CD8-positive, alpha-beta T cell (primary cell): ENCODE measurements at regions of chr16 and their contacts with region 1.

Region 1: GRCh38 chr16:31323959-31324629 is 30.9 kb upstream of the ITGAX start:
- DNase-seq: no peak
- ATAC-seq: no peak
- H3K4me3 ChIP-seq: no peak overlapping the region
- H3K4me3 Mint-ChIP-seq: no peak overlapping the region
- H3K27ac ChIP-seq: no peak overlapping the region
- H3K27ac Mint-ChIP-seq: no peak overlapping the region
- H3K4me1 ChIP-seq: no peaks in the 10 kb centered on the region
- H3K4me1 Mint-ChIP-seq: peaks cover 10% of the 10 kb centered on the region
- H3K27me3 ChIP-seq: no peaks in the 10 kb centered on the region
- H3K27me3 Mint-ChIP-seq: peaks cover 2% of the 10 kb centered on the region
- CTCF ChIP-seq: no peak

Region 2: GRCh38 chr16:31138621-31139578 is 185.2 kb before region 1 on chr16:
- CTCF ChIA-PET with region 1: no interaction called
- POLR2A ChIA-PET with region 1: no interaction called
- intact Hi-C with region 1: no loop called
- DNase-seq: no peak
- ATAC-seq: no peak
- H3K4me3 ChIP-seq: no peak overlapping the region
- H3K4me3 Mint-ChIP-seq: no peak overlapping the region
- H3K27ac ChIP-seq: no peak overlapping the region
- H3K27ac Mint-ChIP-seq: no peak overlapping the region
- H3K4me1 ChIP-seq: peaks cover 16% of the 10 kb centered on the region
- H3K4me1 Mint-ChIP-seq: peaks cover 14% of the 10 kb centered on the region
- H3K27me3 ChIP-seq: no peaks in the 10 kb centered on the region
- H3K27me3 Mint-ChIP-seq: no peaks in the 10 kb centered on the region
- CTCF ChIP-seq: no peak

Region 3: GRCh38 chr16:31365131-31365865 is 41.2 kb after region 1 on chr16:
- CTCF ChIA-PET with region 1: no interaction called
- POLR2A ChIA-PET with region 1: no interaction called
- intact Hi-C with region 1: loop called in 1 of 2 experiments (anchors 10 kb)
- DNase-seq: peak in 2 of 9 experiments; percentile 64 to 81
- ATAC-seq: peak; percentile 77
- H3K4me3 ChIP-seq: no peak overlapping the region
- H3K4me3 Mint-ChIP-seq: peak overlapping the region; percentile 11
- H3K27ac ChIP-seq: peak overlapping the region; percentile 30 to 55
- H3K27ac Mint-ChIP-seq: peak overlapping the region; percentile 58
- H3K4me1 ChIP-seq: peaks cover 11% of the 10 kb centered on the region
- H3K4me1 Mint-ChIP-seq: peaks cover 23% of the 10 kb centered on the region
- H3K27me3 ChIP-seq: no peaks in the 10 kb centered on the region
- H3K27me3 Mint-ChIP-seq: no peaks in the 10 kb centered on the region
- CTCF ChIP-seq: no peak

Region 4: DNA sequence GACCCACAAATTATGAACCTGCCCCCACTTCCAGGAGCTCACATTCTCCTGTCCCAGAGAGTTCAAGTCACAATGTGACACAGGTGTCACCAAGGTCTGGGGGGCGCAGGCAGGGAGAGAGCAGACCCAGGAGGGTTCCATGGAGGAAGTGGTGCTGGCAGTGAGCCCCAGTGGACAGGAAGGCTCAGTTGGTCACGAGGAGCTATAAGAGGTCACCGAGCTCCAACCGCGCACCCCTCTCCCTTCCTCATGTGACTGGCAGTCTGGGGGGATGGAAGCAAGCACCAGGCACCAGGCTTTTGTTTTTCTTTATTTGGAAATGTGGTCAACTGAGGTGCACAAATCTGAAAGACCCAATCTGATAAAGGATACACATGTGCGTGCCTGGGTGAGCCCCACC is 71.6 kb after region 1 on chr16:
- CTCF ChIA-PET with region 1: no interaction called
- POLR2A ChIA-PET with region 1: no interaction called
- intact Hi-C with region 1: no loop called
- DNase-seq: no peak
- ATAC-seq: no peak
- H3K4me3 ChIP-seq: no peak overlapping the region
- H3K4me3 Mint-ChIP-seq: no peak overlapping the region
- H3K27ac ChIP-seq: no peak overlapping the region
- H3K27ac Mint-ChIP-seq: no peak overlapping the region
- H3K4me1 ChIP-seq: peaks cover 14% of the 10 kb centered on the region
- H3K4me1 Mint-ChIP-seq: peaks cover 11% of the 10 kb centered on the region
- H3K27me3 ChIP-seq: no peaks in the 10 kb centered on the region
- H3K27me3 Mint-ChIP-seq: no peaks in the 10 kb centered on the region
- CTCF ChIP-seq: no peak